Colonic mucosa (tissue), 4 donors: ENCODE measurements at regions of chr9 and their contacts with region 1.

Region 1: DNA sequence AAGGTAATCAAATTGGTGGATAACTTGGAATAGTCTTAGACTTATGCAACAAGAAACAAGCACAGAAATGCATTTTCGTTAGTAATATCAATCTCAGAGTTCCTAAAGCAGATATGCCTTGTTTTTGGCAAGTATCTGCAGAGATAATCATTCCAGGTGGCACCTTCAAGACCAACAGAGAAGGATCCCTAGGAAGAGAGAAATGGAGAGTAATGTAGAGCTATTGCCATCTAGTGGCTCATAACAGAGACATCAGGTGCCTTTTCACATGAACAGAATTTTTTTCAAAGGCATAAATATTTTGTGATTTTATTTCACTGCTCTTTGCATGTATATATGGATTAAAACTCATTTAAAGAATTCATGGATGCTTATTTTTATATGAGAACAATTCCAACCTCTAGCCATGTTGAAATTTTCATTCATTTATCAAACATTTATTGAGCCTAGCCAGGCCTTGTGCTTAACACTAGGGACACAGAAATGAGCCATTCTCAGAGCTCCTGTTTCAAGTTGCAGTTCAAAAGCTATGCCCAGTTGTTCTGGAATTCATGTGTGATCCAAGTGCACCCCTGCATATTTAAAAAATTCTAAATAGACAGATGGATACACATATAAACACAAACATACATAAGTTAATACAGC is 117.5 kb upstream of the OR13F1 start:
- DNase-seq: no peak
- H3K4me3 ChIP-seq: no peak overlapping the region
- H3K27ac ChIP-seq: no peak overlapping the region
- H3K4me1 ChIP-seq: no peaks in the 10 kb centered on the region
- H3K27me3 ChIP-seq: no peaks in the 10 kb centered on the region
- CTCF ChIP-seq: peak; percentile 61

Region 2: DNA sequence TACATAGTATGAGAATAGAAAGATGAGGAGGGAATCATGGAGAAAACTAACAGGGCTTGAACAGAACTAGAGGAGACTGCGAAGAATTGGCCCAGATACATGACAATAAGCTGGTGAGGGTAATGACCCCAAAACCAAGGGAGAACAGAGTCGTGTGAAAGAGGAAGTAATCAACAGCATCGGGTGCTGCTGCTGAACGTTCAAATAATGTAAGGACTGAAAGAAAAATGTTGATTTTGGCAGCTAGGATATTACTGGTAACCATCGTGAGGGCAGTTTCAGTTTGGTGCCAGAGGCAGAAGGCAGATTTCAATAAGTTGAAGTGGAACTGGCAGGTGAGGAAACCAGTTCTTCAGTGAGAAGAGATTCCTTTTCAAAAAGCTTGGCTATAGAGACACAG is 359.3 kb before region 1 on chr9:
- intact Hi-C with region 1: loop called (anchors 5 kb)
- DNase-seq: no peak
- H3K4me3 ChIP-seq: no peak overlapping the region
- H3K27ac ChIP-seq: no peak overlapping the region
- H3K4me1 ChIP-seq: no peaks in the 10 kb centered on the region
- H3K27me3 ChIP-seq: no peaks in the 10 kb centered on the region
- CTCF ChIP-seq: no peak

Region 3: GRCh38 chr9:104177003-104177611 is 209.4 kb before region 1 on chr9:
- intact Hi-C with region 1: loop called (anchors 2 kb)
- DNase-seq: no peak
- H3K4me3 ChIP-seq: no peak overlapping the region
- H3K27ac ChIP-seq: no peak overlapping the region
- H3K4me1 ChIP-seq: no peaks in the 10 kb centered on the region
- H3K27me3 ChIP-seq: no peaks in the 10 kb centered on the region
- CTCF ChIP-seq: peak; percentile 36